Sigmoid colon (tissue), 7 donors: ENCODE measurements at regions of chr13 and their contacts with region 1.

Region 1: DNA sequence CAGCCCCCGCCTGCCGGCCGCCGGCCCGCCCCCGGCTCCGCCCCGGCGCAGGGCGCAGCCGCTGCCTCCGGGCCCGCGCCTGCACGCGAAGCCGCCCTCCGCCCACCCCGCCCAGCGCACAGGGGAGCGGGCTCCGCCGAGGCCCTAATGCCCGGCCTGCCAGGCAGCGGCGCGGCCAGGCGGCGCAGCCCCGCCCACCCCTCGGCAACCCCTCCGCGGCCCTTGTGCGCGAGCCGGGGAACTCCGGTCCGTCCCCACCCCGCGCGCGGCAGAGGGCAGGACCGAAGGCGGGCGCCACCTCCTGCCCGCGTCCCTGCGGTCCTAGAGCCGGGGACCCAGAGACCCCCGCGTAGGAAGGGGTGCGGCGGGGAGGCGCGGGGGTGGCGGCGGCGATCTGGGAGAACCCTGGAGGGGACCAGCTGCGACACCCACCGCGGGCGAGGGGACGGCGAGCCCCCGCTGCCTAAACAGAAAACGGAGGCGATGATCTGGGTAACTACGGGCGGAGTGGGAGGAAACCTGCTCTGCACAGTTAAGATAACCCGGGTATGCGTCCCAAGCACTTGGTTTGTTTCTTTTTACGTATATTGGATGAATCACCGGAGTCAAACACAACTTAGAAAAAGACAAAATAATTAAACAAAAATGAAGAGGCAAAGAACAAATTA is 350 bp upstream of the USP12 start:
- DNase-seq: peak; percentile 96
- H3K4me3 ChIP-seq: peak overlapping the region; percentile 71 to 95 (median 92)
- H3K27ac ChIP-seq: peak overlapping the region; percentile 96 to 99 (median 98)
- H3K4me1 ChIP-seq: peaks cover 0 to 43% (median 39%) of the 10 kb centered on the region in 4 donors
- H3K27me3 ChIP-seq: no peaks in the 10 kb centered on the region
- CTCF ChIP-seq: no peak
- EP300 ChIP-seq: no peak
- POLR2A ChIP-seq: no peak

Region 2: GRCh38 chr13:27270594-27271520 is 98.9 kb after region 1 on chr13 and contains the start of gene RASL11A:
- intact Hi-C with region 1: loop called (anchors 2 kb)
- DNase-seq: peak; percentile 95
- H3K4me3 ChIP-seq: peak within 1 kb of the TSS; percentile 73 to 85 (median 79)
- H3K27ac ChIP-seq: peak within 1 kb of the TSS; percentile 92 to 96 (median 96)
- H3K4me1 ChIP-seq: peaks cover 0 to 41% (median 34%) of the 10 kb centered on the region in 4 donors
- H3K27me3 ChIP-seq: no peaks in the 10 kb centered on the region
- CTCF ChIP-seq: peak; percentile 77 to 99 (median 86)
- EP300 ChIP-seq: no peak
- POLR2A ChIP-seq: peak; percentile 61 to 69
- total RNA-seq, gene RASL11A: 14.1 to 123 (median 18.4) TPM

Region 3: DNA sequence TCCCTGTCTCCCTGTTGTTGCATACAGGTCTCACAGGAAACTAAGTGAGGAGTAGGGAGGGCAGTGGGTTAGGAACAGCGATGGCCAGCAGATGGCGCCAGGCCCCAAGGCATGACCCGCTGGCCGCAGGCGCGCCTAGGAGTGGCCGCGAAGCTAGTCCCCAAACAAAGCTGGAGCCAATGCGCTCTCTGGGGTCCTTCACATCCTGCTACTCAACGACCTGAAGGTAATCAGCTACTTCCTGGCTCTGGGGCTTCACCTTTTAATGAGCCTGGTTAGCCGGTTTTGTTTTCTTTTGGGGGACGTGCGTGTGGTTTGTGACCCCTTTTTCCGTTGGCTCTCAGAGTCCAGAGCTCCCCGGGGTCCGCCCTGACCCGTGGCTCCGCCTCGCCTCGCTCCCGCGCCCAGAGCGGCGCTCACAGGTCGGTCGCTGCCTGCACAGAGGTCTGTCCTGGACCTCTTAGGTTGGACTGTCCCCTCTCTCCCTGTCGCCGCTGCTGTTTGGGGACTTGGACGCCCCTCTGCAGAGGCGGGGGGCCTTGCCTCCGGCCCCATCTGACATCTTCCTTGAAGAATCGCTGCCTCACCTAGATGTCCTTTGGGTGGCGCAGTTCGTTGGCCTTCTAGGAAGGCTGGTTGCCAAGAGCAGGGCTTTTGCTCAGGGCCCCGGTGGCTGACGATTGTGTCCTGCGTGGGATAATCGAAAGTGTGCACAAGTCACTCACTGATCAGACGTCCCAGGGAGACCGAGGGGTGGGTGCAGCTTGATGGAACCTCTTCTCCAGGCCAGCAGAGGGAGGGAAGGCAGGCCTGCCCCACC is 190.3 kb after region 1 on chr13:
- intact Hi-C with region 1: loop called (anchors 2 kb)
- DNase-seq: peak; percentile 91
- H3K4me3 ChIP-seq: peak overlapping the region; percentile 18 to 54 (median 46)
- H3K27ac ChIP-seq: peak overlapping the region in 1 of 4 donors; percentile 37
- H3K4me1 ChIP-seq: peaks cover 0 to 17% (median 12%) of the 10 kb centered on the region in 4 donors
- H3K27me3 ChIP-seq: peaks cover 0 to 7% (median 0%) of the 10 kb centered on the region in 3 donors
- CTCF ChIP-seq: peak; percentile 75 to 91 (median 84)
- EP300 ChIP-seq: no peak
- POLR2A ChIP-seq: no peak